Pancreas (tissue), 10 donors: ENCODE measurements at regions of chr15 and their contacts with region 1.

Region 1: GRCh38 chr15:44163370-44163769 is 31.7 kb downstream of the FRMD5 start:
- DNase-seq: no peak
- ATAC-seq: no peak
- H3K4me3 ChIP-seq: no peak overlapping the region
- H3K27ac ChIP-seq: no peak overlapping the region
- H3K4me1 ChIP-seq: no peaks in the 10 kb centered on the region
- H3K27me3 ChIP-seq: no peaks in the 10 kb centered on the region
- CTCF ChIP-seq: no peak

Region 2: DNA sequence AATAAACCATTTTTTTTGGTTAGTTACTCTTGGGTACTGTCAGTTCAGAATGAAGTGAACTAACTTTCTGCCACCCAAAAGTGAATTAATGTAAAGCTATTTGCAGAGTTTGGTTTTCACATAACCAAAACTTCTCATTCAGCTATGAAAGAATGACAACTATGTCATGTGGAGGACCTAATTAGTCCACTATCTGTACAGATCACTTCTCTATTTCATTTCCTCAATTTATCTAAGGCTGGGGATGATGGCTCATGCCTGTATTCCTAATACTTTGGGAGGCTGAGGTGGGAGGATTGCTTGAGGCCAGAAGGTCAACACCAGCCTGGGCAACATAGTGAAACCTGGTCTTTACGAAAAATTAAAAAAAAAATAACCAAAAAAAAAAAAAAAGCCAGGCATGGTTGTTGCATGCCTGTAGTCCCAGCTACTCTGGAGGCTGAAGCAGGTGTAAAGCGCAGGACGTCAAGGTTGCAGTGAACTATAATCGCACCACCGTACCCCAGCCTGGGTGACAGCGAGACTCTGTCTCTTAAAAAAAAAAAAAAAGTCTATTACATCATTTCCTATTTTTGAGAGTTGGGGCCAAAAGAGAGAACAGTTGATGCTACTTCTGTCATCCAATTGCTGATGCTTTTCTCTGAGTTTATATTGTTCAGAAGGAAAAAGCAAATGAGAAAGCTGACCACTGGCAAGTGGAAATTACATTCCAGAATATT is 354.3 kb before region 1 on chr15:
- intact Hi-C with region 1: no loop called
- DNase-seq: no peak
- ATAC-seq: peak in 1 of 4 donors; percentile 36
- H3K4me3 ChIP-seq: no peak overlapping the region
- H3K27ac ChIP-seq: no peak overlapping the region
- H3K4me1 ChIP-seq: no peaks in the 10 kb centered on the region
- H3K27me3 ChIP-seq: no peaks in the 10 kb centered on the region
- CTCF ChIP-seq: no peak

Region 3: DNA sequence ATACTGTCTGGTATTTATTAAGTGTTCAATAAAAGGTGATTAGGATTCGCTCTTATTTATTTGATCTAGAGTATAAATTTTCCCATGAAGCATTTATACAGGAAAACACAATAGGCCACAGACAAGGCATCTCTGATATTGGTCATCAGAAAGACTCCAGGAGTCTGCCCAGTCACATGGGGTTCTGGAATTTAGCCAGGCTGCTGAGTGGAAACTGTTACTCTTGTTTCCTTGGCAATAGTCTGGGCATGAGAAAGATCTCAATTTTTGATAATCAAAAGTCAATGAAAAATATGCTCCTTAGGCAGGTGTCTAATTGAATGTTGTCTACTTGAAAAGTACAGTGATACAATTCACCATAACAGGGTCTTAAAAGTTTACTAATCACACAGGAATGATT is 129.5 kb before region 1 on chr15:
- intact Hi-C with region 1: no loop called
- DNase-seq: peak in 4 of 6 donors; percentile 11 to 31 (median 26)
- ATAC-seq: peak in 3 of 4 donors; percentile 46 to 49 (median 49)
- H3K4me3 ChIP-seq: no peak overlapping the region
- H3K27ac ChIP-seq: no peak overlapping the region
- H3K4me1 ChIP-seq: peaks cover 0 to 7% (median 0%) of the 10 kb centered on the region in 3 donors
- H3K27me3 ChIP-seq: no peaks in the 10 kb centered on the region
- CTCF ChIP-seq: no peak

Region 4: GRCh38 chr15:44102675-44103254 is 60.6 kb before region 1 on chr15:
- intact Hi-C with region 1: loop called in 1 of 3 experiments (anchors 10 kb)
- DNase-seq: peak in 3 of 6 donors; percentile 4 to 36 (median 17)
- ATAC-seq: peak in 3 of 4 donors; percentile 83 to 93 (median 88)
- H3K4me3 ChIP-seq: no peak overlapping the region
- H3K27ac ChIP-seq: no peak overlapping the region
- H3K4me1 ChIP-seq: no peaks in the 10 kb centered on the region
- H3K27me3 ChIP-seq: no peaks in the 10 kb centered on the region
- CTCF ChIP-seq: no peak

Region 5: DNA sequence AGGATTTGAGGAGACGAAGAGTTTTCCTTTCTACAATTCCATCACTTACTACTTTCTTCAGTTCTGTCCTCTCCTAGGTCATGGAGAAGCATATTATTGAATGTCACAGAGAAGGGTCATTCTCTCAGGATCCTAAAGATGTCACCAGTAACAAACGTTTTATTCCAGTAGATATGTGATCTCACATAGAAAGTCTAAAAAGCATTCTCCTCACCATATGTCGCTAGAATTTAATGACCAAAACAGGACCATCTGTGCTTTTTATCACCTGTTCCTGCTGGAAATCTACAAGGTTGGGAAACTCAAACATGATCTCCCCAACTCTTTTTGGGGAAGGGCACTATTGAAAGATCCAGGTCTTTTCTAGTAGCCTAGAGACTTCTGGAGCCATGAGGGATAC is 55.7 kb after region 1 on chr15:
- intact Hi-C with region 1: no loop called
- DNase-seq: no peak
- ATAC-seq: no peak
- H3K4me3 ChIP-seq: no peak overlapping the region
- H3K27ac ChIP-seq: no peak overlapping the region
- H3K4me1 ChIP-seq: no peaks in the 10 kb centered on the region
- H3K27me3 ChIP-seq: no peaks in the 10 kb centered on the region
- CTCF ChIP-seq: no peak

Region 6: DNA sequence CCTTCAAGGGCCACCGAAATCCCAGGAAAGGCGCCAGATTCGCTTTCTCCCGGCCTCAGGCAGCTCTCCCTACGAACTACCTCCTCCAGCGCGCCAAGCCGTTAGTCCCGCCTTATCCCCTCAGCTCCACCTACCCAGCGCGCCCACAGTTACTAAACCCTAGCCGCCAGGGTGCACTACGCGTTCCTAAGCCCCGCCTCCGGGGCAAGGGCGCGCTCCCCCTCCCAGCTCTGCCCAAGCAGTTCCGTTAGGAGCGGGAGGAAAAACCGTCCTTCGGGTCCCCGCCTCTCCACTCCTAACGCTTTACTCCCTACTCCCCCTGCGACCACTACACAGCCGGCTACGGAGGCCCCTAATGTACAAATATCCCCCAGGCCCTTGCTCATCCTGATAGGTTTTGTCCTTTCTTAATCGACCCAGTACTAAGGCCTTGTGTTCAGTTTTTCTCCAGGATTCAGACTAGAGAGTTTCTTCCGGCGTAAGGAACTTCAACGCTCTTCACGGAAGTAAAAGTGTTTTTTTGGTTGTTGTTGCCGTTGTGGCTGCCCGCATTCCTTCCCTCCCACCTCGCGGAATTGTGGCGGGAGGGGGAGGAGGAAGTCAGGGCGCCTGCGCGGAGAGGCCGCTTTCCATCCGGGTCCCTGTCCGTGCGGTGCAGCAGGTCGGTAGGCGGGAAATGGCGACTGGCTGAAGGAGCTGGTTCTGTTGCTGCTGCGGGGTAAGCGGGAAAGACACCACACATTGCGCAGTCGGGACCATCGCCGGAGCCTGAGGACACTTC is 263.8 kb after region 1 on chr15 and contains the start of gene CTDSPL2:
- intact Hi-C with region 1: no loop called
- DNase-seq: peak; percentile 95 to 99 (median 98)
- ATAC-seq: peak; percentile 94 to 98 (median 94)
- H3K4me3 ChIP-seq: peak within 1 kb of the TSS; percentile 62 to 92 (median 67)
- H3K27ac ChIP-seq: peak within 1 kb of the TSS; percentile 72 to 96 (median 86)
- H3K4me1 ChIP-seq: peaks cover 3 to 20% (median 12%) of the 10 kb centered on the region in 3 donors
- H3K27me3 ChIP-seq: no peaks in the 10 kb centered on the region
- CTCF ChIP-seq: peak in 1 of 4 donors; percentile 27
- total RNA-seq, gene CTDSPL2: 14.6 to 25.1 (median 15.4) TPM